ENCODE measurements at regions of chr12 and their contacts with region 1.

Region 1: DNA sequence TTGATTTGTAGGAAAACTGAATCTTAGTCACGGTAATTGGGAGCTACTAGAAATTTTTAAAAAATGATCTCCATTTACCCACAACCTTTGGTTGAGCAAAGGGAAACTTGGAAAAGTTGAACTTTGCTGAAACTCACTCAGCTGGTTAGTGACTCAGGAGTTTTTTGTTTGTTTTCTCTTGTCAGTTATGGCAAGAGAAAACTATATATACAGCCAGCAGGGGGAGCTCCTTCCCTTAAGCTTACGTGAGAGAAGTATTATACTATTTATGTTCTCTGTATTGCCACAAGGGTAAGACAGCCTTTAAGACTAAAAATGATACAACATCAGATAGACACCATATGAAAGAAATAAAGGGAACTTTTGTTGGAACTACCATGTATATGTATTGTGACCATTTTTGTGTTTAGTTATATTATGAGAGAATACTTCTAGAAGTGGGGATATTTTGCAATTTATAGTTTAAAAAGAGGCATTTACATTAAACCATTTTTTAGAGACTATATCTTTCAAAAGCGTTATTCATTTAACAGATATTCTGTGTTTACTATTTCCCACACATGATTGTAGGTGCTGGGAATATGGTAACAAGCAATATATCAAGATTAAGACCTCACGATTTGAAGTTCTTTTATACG is 28.1 kb upstream of the TBC1D30 start:
- DNase-seq: peak; percentile 70
- ATAC-seq: peak; percentile 86
- H3K4me3 Mint-ChIP-seq: no peak overlapping the region
- H3K27ac Mint-ChIP-seq: no peak overlapping the region
- H3K4me1 Mint-ChIP-seq: no peaks in the 10 kb centered on the region
- H3K27me3 Mint-ChIP-seq: peaks cover 18% of the 10 kb centered on the region

Region 2: GRCh38 chr12:64785838-64786237 is 10.5 kb before region 1 on chr12:
- CTCF ChIA-PET with region 1: interaction called, 16 read pairs
- DNase-seq: no peak
- ATAC-seq: no peak
- H3K4me3 Mint-ChIP-seq: no peak overlapping the region
- H3K27ac Mint-ChIP-seq: no peak overlapping the region
- H3K4me1 Mint-ChIP-seq: peaks cover 9% of the 10 kb centered on the region
- H3K27me3 Mint-ChIP-seq: peaks cover 43% of the 10 kb centered on the region

Region 3: DNA sequence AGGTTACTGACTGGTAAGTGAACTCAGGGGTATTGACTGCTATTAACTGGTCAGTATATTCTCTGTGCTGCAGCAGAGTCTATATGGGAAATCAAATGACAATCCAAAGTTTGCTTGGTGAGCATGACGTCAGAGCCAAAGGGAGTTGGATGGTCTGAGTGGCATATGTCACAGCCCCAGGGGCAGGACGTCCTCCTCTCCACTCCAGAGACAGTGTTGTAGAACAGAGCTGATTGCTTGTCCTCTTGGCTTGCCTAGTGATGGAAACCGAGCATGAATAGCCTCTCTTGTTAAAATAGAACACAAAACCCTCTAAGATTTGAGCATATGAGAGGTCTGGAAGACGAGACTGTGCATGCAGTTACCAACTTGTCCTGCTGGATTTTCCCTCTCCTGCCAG is 24.9 kb after region 1 on chr12:
- CTCF ChIA-PET with region 1: interaction called, 10 read pairs
- DNase-seq: no peak
- ATAC-seq: no peak
- H3K4me3 Mint-ChIP-seq: no peak overlapping the region
- H3K27ac Mint-ChIP-seq: no peak overlapping the region
- H3K4me1 Mint-ChIP-seq: peaks cover 13% of the 10 kb centered on the region
- H3K27me3 Mint-ChIP-seq: peaks cover 42% of the 10 kb centered on the region